CD8-positive, alpha-beta T cell (primary cell): ENCODE measurements at regions of chr19 and their contacts with region 1.

Region 1: DNA sequence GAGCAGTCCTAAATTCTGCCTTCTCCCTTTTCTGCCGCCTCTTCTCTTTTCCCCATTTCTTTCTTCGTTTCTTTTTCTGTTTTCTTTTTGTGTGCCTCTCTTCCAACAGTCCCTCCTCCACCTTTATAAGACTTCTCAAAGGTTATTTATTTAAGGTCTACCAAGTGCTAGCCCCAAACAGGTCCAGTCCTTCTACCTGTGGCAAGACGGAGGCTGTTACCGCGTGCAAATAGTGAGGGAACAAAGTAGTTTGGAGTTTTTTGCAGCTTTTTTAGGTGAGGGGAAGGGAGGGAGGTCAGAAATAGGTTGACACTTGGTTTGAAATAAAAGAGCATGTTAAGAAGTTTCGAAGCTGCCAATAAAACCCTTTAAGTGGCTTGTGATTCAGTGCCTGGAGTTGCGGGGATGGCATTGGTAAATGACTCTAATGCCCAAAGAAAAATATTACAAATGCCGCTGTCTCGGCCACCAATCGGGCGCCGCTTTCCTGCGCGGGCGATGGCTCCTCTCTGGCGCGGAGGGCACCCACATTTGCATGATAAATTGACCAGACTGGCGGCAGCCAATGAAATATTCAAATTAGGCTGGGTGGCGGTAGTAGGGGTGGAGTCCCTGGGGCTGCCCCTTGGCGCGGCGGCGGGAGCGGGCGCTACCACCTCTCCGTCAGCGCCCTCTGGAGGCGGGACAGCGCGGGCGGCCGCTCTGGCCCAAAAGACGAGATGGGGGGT is 7.5 kb upstream of the TSHZ3 start:
- DNase-seq: peak in 7 of 9 experiments; percentile 34 to 70 (median 55)
- ATAC-seq: peak; percentile 54
- H3K4me3 ChIP-seq: no peak overlapping the region
- H3K4me3 Mint-ChIP-seq: no peak overlapping the region
- H3K27ac ChIP-seq: no peak overlapping the region
- H3K27ac Mint-ChIP-seq: no peak overlapping the region
- H3K4me1 ChIP-seq: peaks cover 15% of the 10 kb centered on the region
- H3K4me1 Mint-ChIP-seq: peaks cover 26% of the 10 kb centered on the region
- H3K27me3 ChIP-seq: peaks cover 43 to 56% of the 10 kb centered on the region in 2 experiments
- H3K27me3 Mint-ChIP-seq: peaks cover 75% of the 10 kb centered on the region
- CTCF ChIP-seq: peak; percentile 34

Region 2: DNA sequence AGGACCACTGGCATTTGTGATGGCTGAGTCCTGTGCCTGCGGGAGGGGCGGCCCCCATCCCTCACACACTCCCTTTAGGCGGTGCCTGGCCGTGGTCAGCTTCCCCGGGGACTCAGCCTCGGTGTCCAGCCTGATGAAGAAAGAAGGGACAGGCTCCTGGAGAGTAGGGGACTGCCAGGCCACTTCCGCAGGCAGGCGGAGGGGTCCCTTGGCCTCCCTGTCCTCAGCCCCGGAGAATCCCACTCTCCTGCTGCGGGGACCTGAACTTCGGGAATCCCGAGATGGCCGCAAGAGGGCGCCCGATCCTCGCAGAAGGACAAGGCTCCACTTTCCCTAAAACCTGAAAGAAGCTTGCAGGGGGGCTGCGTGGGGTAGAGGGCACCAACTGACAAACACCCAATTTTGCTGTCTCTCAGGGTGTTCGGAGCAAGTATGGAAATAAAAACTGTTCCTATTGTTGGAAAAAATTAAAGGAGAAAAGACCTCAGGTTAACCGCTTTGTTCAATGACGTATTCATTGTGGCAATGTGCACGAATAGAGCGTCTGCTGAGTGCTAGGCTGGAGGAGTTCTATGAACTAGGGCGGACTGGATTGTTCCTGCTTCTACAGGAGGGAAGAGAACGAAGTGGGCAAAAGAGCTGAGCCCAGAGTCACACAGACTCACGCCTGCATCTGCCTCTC is 687.3 kb before region 1 on chr19:
- CTCF ChIA-PET with region 1: no interaction called
- POLR2A ChIA-PET with region 1: no interaction called
- intact Hi-C with region 1: loop called (anchors 5 kb)
- DNase-seq: peak in 8 of 9 experiments; percentile 11 to 59 (median 41)
- ATAC-seq: no peak
- H3K4me3 ChIP-seq: no peak overlapping the region
- H3K4me3 Mint-ChIP-seq: no peak overlapping the region
- H3K27ac ChIP-seq: no peak overlapping the region
- H3K27ac Mint-ChIP-seq: no peak overlapping the region
- H3K4me1 ChIP-seq: no peaks in the 10 kb centered on the region
- H3K4me1 Mint-ChIP-seq: no peaks in the 10 kb centered on the region
- H3K27me3 ChIP-seq: peaks cover 0 to 6% of the 10 kb centered on the region in 2 experiments
- H3K27me3 Mint-ChIP-seq: peaks cover 36% of the 10 kb centered on the region
- CTCF ChIP-seq: peak; percentile 66

Region 3: GRCh38 chr19:30682999-30683536 is 673.7 kb before region 1 on chr19:
- CTCF ChIA-PET with region 1: interaction called, 8 read pairs
- POLR2A ChIA-PET with region 1: no interaction called
- intact Hi-C with region 1: loop called in 1 of 2 experiments (anchors 5 kb)
- DNase-seq: peak in 8 of 9 experiments; percentile 27 to 61 (median 44)
- ATAC-seq: no peak
- H3K4me3 ChIP-seq: no peak overlapping the region
- H3K4me3 Mint-ChIP-seq: no peak overlapping the region
- H3K27ac ChIP-seq: no peak overlapping the region
- H3K27ac Mint-ChIP-seq: no peak overlapping the region
- H3K4me1 ChIP-seq: no peaks in the 10 kb centered on the region
- H3K4me1 Mint-ChIP-seq: no peaks in the 10 kb centered on the region
- H3K27me3 ChIP-seq: no peaks in the 10 kb centered on the region
- H3K27me3 Mint-ChIP-seq: peaks cover 35% of the 10 kb centered on the region
- CTCF ChIP-seq: peak; percentile 68

Region 4: DNA sequence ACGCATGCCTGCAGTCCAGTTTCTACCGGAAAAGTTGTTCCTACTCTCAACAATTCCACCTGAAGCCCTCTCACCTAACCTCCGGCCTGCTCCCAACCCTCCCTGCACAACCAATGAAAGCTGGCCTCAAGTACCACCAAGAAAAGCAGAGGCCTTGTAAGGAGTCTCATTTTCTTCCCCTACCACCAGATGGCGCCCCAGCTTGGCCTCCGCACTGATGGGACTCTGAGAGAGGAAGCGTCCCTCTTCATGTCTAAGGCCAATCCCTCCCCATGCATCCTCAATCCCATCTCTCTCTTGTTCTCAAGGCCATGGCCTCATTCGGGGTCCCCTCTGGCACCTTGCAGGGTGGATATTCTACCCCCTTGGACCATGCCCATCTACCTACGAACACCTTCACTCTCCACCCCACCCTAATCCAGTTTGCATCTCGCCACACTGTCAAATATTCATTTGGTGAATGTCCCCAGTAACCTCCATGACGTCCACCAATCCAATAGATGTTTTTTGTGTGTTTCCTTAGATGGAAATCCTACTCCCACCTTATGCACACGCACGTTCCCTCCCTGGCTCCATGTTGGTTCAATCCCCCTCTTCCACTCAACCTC is 571.8 kb before region 1 on chr19:
- CTCF ChIA-PET with region 1: interaction called, 3 read pairs
- POLR2A ChIA-PET with region 1: no interaction called
- intact Hi-C with region 1: loop called (anchors 2 to 10 kb)
- DNase-seq: peak; percentile 18 to 72 (median 51)
- ATAC-seq: no peak
- H3K4me3 ChIP-seq: no peak overlapping the region
- H3K4me3 Mint-ChIP-seq: no peak overlapping the region
- H3K27ac ChIP-seq: no peak overlapping the region
- H3K27ac Mint-ChIP-seq: no peak overlapping the region
- H3K4me1 ChIP-seq: no peaks in the 10 kb centered on the region
- H3K4me1 Mint-ChIP-seq: no peaks in the 10 kb centered on the region
- H3K27me3 ChIP-seq: no peaks in the 10 kb centered on the region
- H3K27me3 Mint-ChIP-seq: peaks cover 9% of the 10 kb centered on the region
- CTCF ChIP-seq: peak; percentile 44

Region 5: GRCh38 chr19:31054430-31054829 is 302.3 kb before region 1 on chr19:
- CTCF ChIA-PET with region 1: no interaction called
- POLR2A ChIA-PET with region 1: no interaction called
- intact Hi-C with region 1: loop called in 1 of 2 experiments (anchors 2 kb)
- DNase-seq: peak in 4 of 9 experiments; percentile 10 to 47 (median 26)
- ATAC-seq: no peak
- H3K4me3 ChIP-seq: no peak overlapping the region
- H3K4me3 Mint-ChIP-seq: no peak overlapping the region
- H3K27ac ChIP-seq: no peak overlapping the region
- H3K27ac Mint-ChIP-seq: no peak overlapping the region
- H3K4me1 ChIP-seq: no peaks in the 10 kb centered on the region
- H3K4me1 Mint-ChIP-seq: no peaks in the 10 kb centered on the region
- H3K27me3 ChIP-seq: no peaks in the 10 kb centered on the region
- H3K27me3 Mint-ChIP-seq: peaks cover 18% of the 10 kb centered on the region
- CTCF ChIP-seq: peak; percentile 14

Region 6: DNA sequence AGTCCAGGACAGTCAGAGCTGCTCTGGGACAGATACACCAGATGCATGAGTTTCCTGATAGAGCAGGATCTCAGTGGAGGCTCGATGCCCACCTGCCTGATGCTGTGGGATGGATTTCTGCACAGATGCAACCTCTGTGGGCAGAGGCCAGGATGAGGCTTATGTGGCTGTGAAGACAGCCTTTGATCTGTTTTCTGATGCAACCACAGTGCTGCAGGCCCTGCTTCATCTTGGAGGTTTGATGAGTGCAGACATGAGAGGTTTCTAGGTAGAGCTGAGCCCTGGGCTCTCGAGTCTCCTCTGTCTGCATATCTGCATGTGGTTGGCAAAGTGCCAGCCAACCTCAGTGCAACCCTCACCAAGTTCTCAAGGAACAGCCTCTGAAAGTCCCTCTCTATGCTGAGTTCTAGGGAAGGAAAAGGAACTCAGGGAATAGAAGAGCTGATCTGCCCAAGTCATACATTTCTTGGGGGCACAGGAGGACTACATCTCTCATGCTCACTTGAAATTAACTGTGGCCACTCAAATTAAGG is 15.6 kb after region 1 on chr19:
- CTCF ChIA-PET with region 1: no interaction called
- POLR2A ChIA-PET with region 1: no interaction called
- intact Hi-C with region 1: no loop called
- DNase-seq: peak in 2 of 9 experiments; percentile 57 to 67
- ATAC-seq: no peak
- H3K4me3 ChIP-seq: no peak overlapping the region
- H3K4me3 Mint-ChIP-seq: no peak overlapping the region
- H3K27ac ChIP-seq: no peak overlapping the region
- H3K27ac Mint-ChIP-seq: no peak overlapping the region
- H3K4me1 ChIP-seq: peaks cover 16% of the 10 kb centered on the region
- H3K4me1 Mint-ChIP-seq: peaks cover 26% of the 10 kb centered on the region
- H3K27me3 ChIP-seq: peaks cover 0 to 14% of the 10 kb centered on the region in 2 experiments
- H3K27me3 Mint-ChIP-seq: peaks cover 29% of the 10 kb centered on the region
- CTCF ChIP-seq: no peak